CD4-positive, alpha-beta memory T cell (primary cell): ENCODE measurements at regions of chr1 and their contacts with region 1.

Region 1: GRCh38 chr1:231603598-231604275 is 22.9 kb upstream of the DISC1 start:
- DNase-seq: peak in 4 of 5 donors; percentile 60 to 67 (median 63)
- H3K4me3 ChIP-seq: peak overlapping the region; percentile 63 to 74
- H3K4me3 Mint-ChIP-seq: peak overlapping the region; percentile 89 to 97 (median 94)
- H3K27ac ChIP-seq: peak overlapping the region; percentile 48
- H3K27ac Mint-ChIP-seq: peak overlapping the region; percentile 70 to 92 (median 89)
- H3K4me1 ChIP-seq: no peaks in the 10 kb centered on the region
- H3K4me1 Mint-ChIP-seq: peaks cover 7 to 8% (median 8%) of the 10 kb centered on the region in 4 donors
- H3K27me3 ChIP-seq: no peaks in the 10 kb centered on the region
- H3K27me3 Mint-ChIP-seq: no peaks in the 10 kb centered on the region

Region 2: DNA sequence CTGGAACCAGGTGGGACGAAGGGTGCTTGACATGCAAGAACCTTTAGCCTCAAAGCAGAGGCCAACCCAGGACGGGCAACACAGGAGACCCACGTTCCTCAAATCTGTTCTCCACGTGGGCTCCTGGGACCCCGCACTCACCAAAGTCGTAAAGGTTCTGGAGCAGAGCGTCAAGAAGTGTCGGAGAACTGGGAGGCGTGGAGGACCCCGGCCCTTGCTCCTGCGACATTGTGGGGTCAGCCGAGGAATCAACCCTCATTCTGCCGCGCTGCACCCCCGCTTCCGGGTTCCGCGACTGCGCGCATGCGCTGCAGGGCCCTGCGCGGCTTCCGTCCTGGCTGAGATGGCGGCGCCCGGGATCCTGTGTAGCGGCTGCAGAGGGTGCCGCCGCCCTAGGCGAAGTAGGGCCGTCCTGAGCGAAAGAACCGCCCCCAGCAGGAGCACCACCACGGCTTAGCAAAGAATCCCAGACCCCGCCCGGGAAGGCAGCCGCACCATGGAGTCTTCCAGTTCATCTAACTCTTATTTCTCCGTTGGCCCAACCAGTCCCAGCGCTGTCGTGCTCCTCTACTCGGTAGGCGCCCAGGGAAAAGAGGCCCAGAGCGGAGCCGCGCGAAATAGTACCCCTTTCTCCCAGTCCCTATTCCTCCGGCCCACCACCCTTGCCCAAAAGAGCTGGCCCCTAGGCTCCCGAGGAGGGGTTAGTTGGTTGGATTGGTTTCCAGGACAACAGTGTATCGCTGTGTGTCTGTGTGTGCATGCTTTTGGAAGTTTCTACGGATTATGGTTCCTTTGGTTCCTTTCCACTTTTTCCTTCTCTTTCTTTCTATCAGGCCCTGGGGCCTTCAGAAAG is 362.6 kb before region 1 on chr1 and contains the start of gene GNPAT:
- CTCF ChIA-PET with region 1: no interaction called
- POLR2A ChIA-PET with region 1: no interaction called
- intact Hi-C with region 1: loop called (anchors 5 kb)
- DNase-seq: peak; percentile 87 to 94 (median 91)
- H3K4me3 ChIP-seq: peak within 1 kb of the TSS; percentile 83 to 99
- H3K4me3 Mint-ChIP-seq: peak within 1 kb of the TSS; percentile 95 to 99 (median 98)
- H3K27ac ChIP-seq: peak within 1 kb of the TSS; percentile 93
- H3K27ac Mint-ChIP-seq: peak within 1 kb of the TSS; percentile 85 to 99 (median 98)
- H3K4me1 ChIP-seq: peaks cover 56% of the 10 kb centered on the region
- H3K4me1 Mint-ChIP-seq: peaks cover 55 to 85% (median 71%) of the 10 kb centered on the region in 4 donors
- H3K27me3 ChIP-seq: no peaks in the 10 kb centered on the region
- H3K27me3 Mint-ChIP-seq: no peaks in the 10 kb centered on the region
- total RNA-seq, gene GNPAT: 36.9 to 41.2 TPM

Region 3: GRCh38 chr1:231315887-231316286 is 287.9 kb before region 1 on chr1:
- CTCF ChIA-PET with region 1: interaction called, 20 read pairs
- POLR2A ChIA-PET with region 1: no interaction called
- intact Hi-C with region 1: loop called (anchors 1 kb)
- DNase-seq: peak in 4 of 5 donors; percentile 15 to 38 (median 18)
- H3K4me3 ChIP-seq: no peak overlapping the region
- H3K4me3 Mint-ChIP-seq: peak overlapping the region in 1 of 8 donors; percentile 26
- H3K27ac ChIP-seq: no peak overlapping the region
- H3K27ac Mint-ChIP-seq: peak overlapping the region in 1 of 7 donors; percentile 19
- H3K4me1 ChIP-seq: no peaks in the 10 kb centered on the region
- H3K4me1 Mint-ChIP-seq: no peaks in the 10 kb centered on the region
- H3K27me3 ChIP-seq: no peaks in the 10 kb centered on the region
- H3K27me3 Mint-ChIP-seq: peaks cover 0 to 1% of the 10 kb centered on the region in 2 donors

Region 4: GRCh38 chr1:231528172-231529029 is 75.3 kb before region 1 on chr1 and contains the start of gene TSNAX:
- CTCF ChIA-PET with region 1: interaction called, 6 read pairs
- POLR2A ChIA-PET with region 1: no interaction called
- intact Hi-C with region 1: loop called (anchors 5 kb)
- DNase-seq: peak; percentile 87 to 94 (median 93)
- H3K4me3 ChIP-seq: peak within 1 kb of the TSS; percentile 59 to 86
- H3K4me3 Mint-ChIP-seq: peak within 1 kb of the TSS; percentile 96 to 98 (median 98)
- H3K27ac ChIP-seq: peak within 1 kb of the TSS; percentile 82
- H3K27ac Mint-ChIP-seq: peak within 1 kb of the TSS; percentile 99 to 100 (median 100)
- H3K4me1 ChIP-seq: peaks cover 52% of the 10 kb centered on the region
- H3K4me1 Mint-ChIP-seq: peaks cover 19 to 52% (median 36%) of the 10 kb centered on the region in 4 donors
- H3K27me3 ChIP-seq: no peaks in the 10 kb centered on the region
- H3K27me3 Mint-ChIP-seq: no peaks in the 10 kb centered on the region
- total RNA-seq, gene TSNAX: 43.5 to 50.7 TPM